ENCODE measurements at regions of chr4 and their contacts with region 1.

Region 1: GRCh38 chr4:3898098-3898497 is 131.9 kb downstream of the ADRA2C start:
- DNase-seq: no peak
- ATAC-seq: no peak
- H3K4me3 Mint-ChIP-seq: no peak overlapping the region
- H3K27ac Mint-ChIP-seq: no peak overlapping the region
- H3K4me1 Mint-ChIP-seq: no peaks in the 10 kb centered on the region
- H3K27me3 Mint-ChIP-seq: peaks cover 5% of the 10 kb centered on the region
- CTCF ChIP-seq: no peak

Region 2: DNA sequence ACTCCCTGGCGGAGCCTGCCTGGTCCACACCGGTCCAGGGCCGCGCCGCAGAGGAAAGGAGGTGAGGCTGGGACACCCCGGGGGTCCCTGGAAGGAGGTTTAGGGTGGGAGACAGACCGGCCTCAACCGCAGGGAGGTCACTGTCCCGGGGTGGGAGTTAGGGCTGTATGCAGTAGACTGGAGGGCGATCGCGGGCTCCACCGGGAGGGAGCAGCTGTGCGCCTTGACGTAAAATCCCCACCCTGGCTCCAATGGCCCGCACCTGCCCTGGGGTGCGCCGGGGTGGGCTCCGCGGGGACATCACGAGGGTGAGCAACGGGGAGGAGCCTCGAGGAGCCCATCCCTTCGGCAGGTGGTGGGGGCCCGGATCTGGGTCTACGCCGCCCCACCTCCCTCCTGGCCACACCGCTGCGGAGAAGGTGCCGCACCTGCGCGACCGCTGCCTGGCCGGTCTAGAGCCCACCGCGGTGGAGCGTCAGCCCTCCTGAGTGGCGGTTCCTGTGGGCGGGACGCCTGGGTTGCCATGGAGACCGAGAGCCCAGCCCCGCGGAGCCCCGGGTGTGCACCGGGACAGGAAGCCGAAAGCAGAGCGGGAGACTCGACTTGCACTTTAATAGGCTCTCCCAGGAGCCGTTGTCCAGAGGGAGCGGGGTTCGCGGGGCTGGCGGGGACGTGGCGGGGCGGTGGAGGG is 26.8 kb before region 1 on chr4:
- CTCF ChIA-PET with region 1: no interaction called
- POLR2A ChIA-PET with region 1: no interaction called
- intact Hi-C with region 1: no loop called
- DNase-seq: peak; percentile 57
- ATAC-seq: peak; percentile 75
- H3K4me3 Mint-ChIP-seq: peak overlapping the region; percentile 14
- H3K27ac Mint-ChIP-seq: no peak overlapping the region
- H3K4me1 Mint-ChIP-seq: peaks cover 4% of the 10 kb centered on the region
- H3K27me3 Mint-ChIP-seq: peaks cover 39% of the 10 kb centered on the region
- CTCF ChIP-seq: no peak

Region 3: DNA sequence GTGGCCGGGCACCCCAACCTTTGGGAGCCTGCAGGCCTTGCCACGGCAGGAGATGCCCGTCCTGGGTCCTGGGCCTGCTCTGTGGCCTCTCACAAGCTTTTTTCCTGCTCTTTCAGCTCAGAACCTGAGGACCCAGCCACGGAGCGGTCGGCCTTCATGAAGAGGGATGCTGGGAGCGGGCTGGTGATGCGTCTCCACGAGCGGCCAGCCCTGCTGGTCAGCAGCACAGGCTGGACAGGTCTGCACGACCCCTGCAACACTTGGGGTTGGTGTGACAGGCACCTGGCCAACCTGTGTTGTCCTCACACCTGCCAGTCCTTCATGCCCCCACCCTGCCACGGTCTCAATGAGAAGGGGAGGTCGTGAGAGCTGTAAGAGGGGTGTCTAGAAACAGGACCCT is 38.1 kb after region 1 on chr4:
- CTCF ChIA-PET with region 1: interaction called, 3 read pairs
- POLR2A ChIA-PET with region 1: no interaction called
- intact Hi-C with region 1: loop called (anchors 5 kb)
- DNase-seq: no peak
- ATAC-seq: no peak
- H3K4me3 Mint-ChIP-seq: no peak overlapping the region
- H3K27ac Mint-ChIP-seq: no peak overlapping the region
- H3K4me1 Mint-ChIP-seq: no peaks in the 10 kb centered on the region
- H3K27me3 Mint-ChIP-seq: peaks cover 3% of the 10 kb centered on the region
- CTCF ChIP-seq: no peak

Region 4: DNA sequence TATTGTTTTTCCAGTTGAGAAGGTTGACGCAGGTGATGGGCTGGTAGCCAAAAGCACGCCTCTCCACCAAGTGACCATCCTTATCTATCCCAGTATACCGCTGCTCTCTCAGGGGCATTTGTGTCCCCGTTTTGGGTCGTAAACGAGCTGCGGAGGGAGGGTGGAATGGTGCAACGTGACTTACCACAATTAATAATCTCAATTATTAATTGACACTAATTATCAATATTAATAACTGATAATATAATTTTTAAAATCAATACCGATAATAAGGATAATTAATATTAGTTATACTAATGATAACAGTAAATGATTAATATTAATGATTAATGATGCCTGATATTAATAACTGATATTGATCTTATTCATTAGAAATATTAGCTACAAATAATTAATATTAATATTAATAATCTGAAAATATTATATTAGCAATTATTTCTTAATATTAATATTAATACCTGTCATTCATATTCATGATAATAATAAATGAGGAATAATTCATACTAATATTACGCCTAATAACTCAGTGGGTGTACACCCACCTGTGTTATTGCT is 272.6 kb after region 1 on chr4:
- CTCF ChIA-PET with region 1: no interaction called
- POLR2A ChIA-PET with region 1: no interaction called
- intact Hi-C with region 1: loop called (anchors 5 kb)
- DNase-seq: no peak
- ATAC-seq: no peak
- H3K4me3 Mint-ChIP-seq: no peak overlapping the region
- H3K27ac Mint-ChIP-seq: no peak overlapping the region
- H3K4me1 Mint-ChIP-seq: no peaks in the 10 kb centered on the region
- H3K27me3 Mint-ChIP-seq: peaks cover 8% of the 10 kb centered on the region
- CTCF ChIP-seq: no peak